Ascending aorta (tissue), 2 donors: ENCODE measurements at regions of chr7 and their contacts with region 1.

Region 1: GRCh38 chr7:73718905-73719805 is at the start of gene STX1A:
- DNase-seq: peak in 1 of 2 donors; percentile 81
- H3K4me3 ChIP-seq: peak within 1 kb of the TSS; percentile 93 to 97
- H3K27ac ChIP-seq: peak within 1 kb of the TSS in 1 of 2 donors; percentile 72
- H3K4me1 ChIP-seq: peaks cover 20 to 43% of the 10 kb centered on the region in 2 donors
- H3K27me3 ChIP-seq: no peaks in the 10 kb centered on the region
- CTCF ChIP-seq: no peak
- total RNA-seq, gene STX1A: 13.1 TPM

Region 2: GRCh38 chr7:73683056-73683964 is 35.8 kb before region 1 on chr7 and contains the starts of genes BUD23 and DNAJC30:
- intact Hi-C with region 1: loop called (anchors 2 kb)
- DNase-seq: peak; percentile 88 to 98
- H3K4me3 ChIP-seq: peak within 1 kb of the TSS; percentile 82 to 99
- H3K27ac ChIP-seq: peak within 1 kb of the TSS; percentile 86 to 90
- H3K4me1 ChIP-seq: peaks cover 7 to 23% of the 10 kb centered on the region in 2 donors
- H3K27me3 ChIP-seq: no peaks in the 10 kb centered on the region
- CTCF ChIP-seq: peak; percentile 5 to 31 (median 8)
- total RNA-seq, gene BUD23: 5.6 TPM
- total RNA-seq, gene DNAJC30: 16.0 TPM